T-cell (primary cell): ENCODE measurements at regions of chr11 and their contacts with region 1.

Region 1: DNA sequence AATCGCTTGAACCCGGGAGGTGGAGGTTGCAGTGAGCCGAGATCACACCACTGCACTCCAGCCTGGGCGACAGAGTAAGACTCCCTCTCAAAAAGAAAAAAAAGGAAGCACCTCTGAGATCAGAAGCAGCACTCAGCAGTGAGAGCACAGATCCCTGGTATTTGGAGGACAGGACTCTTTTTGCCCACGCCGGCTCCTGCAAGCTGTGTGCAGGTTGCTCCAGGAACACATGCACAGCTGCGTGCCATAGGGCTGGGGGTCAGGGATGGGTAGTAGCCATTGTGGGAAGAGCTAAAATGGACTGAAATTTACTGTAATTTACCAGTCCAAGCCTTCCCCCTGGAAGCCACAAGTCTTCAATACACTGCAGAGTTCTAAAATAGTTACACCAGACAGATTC is 22.6 kb upstream of the KMT5B start:
- DNase-seq: no peak
- ATAC-seq: no peak
- H3K4me3 ChIP-seq: no peak overlapping the region
- H3K4me3 Mint-ChIP-seq: no peak overlapping the region
- H3K27ac ChIP-seq: no peak overlapping the region
- H3K27ac Mint-ChIP-seq: no peak overlapping the region
- H3K4me1 ChIP-seq: no peaks in the 10 kb centered on the region
- H3K4me1 Mint-ChIP-seq: no peaks in the 10 kb centered on the region
- H3K27me3 ChIP-seq: peaks cover 0 to 25% of the 10 kb centered on the region in 2 experiments
- H3K27me3 Mint-ChIP-seq: peaks cover 18% of the 10 kb centered on the region in 2 donors

Region 2: GRCh38 chr11:68287419-68287818 is 51.8 kb after region 1 on chr11:
- CTCF ChIA-PET with region 1: no interaction called
- POLR2A ChIA-PET with region 1: interaction called in 1 of 2 experiments, 10 read pairs
- DNase-seq: no peak
- ATAC-seq: no peak
- H3K4me3 ChIP-seq: no peak overlapping the region
- H3K4me3 Mint-ChIP-seq: no peak overlapping the region
- H3K27ac ChIP-seq: no peak overlapping the region
- H3K27ac Mint-ChIP-seq: no peak overlapping the region
- H3K4me1 ChIP-seq: peaks cover 4 to 7% of the 10 kb centered on the region in 2 experiments
- H3K4me1 Mint-ChIP-seq: peaks cover 9 to 12% (median 10%) of the 10 kb centered on the region in 3 donors
- H3K27me3 ChIP-seq: peaks cover 0 to 9% of the 10 kb centered on the region in 2 experiments
- H3K27me3 Mint-ChIP-seq: peaks cover 3 to 13% of the 10 kb centered on the region in 2 donors